CD4-positive, alpha-beta T cell (primary cell): ENCODE measurements at regions of chrX and their contacts with region 1.

Region 1: DNA sequence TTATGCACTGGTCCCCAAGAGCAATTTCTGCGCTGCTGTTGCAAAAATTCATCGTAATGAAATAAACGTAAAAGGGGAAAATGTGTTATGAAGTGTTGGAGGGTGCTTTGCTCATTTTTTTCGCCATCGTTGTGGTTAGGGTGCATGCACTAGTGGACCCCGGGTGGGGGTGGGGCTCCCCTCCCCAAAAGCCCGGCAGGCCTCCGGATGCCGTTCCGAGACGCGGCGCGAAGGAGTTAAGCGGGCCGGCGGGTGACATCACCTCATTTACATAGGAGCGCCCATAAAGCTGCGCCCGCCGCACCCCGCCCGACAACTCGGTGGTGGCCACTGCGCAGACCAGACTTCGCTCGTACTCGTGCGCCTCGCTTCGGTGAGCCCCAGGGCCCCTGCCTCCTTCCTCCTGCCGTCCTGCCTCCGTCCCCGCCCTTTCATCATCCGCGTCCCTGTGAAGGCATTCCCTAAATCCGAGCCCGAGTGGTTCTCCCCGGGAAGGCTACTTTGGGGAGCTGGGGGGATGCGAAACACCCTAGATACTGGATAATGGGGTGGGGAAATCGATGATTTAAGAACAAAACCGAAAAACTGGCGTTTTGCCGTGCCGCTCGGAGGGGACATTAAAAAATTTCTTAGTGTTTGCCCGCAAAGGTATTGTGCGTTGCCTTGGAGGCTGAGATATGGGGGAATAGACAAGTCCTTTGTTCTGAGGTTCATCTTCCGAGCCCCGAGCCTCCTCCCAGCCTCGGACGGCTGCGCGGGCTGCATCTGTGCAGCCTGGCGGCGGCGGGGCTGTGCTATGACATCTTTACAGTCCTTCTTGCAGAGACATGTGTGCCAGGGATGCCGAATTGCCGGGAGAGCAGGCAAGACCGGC is at the start of gene TMSB4X:
- DNase-seq: peak; percentile 70 to 90 (median 82)
- ATAC-seq: peak; percentile 35
- H3K4me3 ChIP-seq: peak within 1 kb of the TSS; percentile 98
- H3K4me3 Mint-ChIP-seq: peak within 1 kb of the TSS; percentile 100
- H3K27ac ChIP-seq: peak within 1 kb of the TSS; percentile 86 to 91
- H3K27ac Mint-ChIP-seq: peak within 1 kb of the TSS; percentile 95
- H3K4me1 ChIP-seq: peaks cover 29% of the 10 kb centered on the region
- H3K4me1 Mint-ChIP-seq: peaks cover 39% of the 10 kb centered on the region
- H3K27me3 ChIP-seq: no peaks in the 10 kb centered on the region
- H3K27me3 Mint-ChIP-seq: no peaks in the 10 kb centered on the region
- CTCF ChIP-seq: no peak
- total RNA-seq, gene TMSB4X: 2,621 to 2,738 TPM

Region 2: GRCh38 chrX:12955882-12956703 is 18.9 kb before region 1 on chrX:
- CTCF ChIA-PET with region 1: interaction called, 181 read pairs
- POLR2A ChIA-PET with region 1: interaction called, 1,050 read pairs
- intact Hi-C with region 1: loop called (anchors 1 to 2 kb)
- DNase-seq: peak in 11 of 14 experiments; percentile 38 to 84 (median 61)
- ATAC-seq: peak; percentile 18
- H3K4me3 ChIP-seq: peak overlapping the region; percentile 47
- H3K4me3 Mint-ChIP-seq: peak overlapping the region; percentile 89
- H3K27ac ChIP-seq: peak overlapping the region; percentile 87 to 89
- H3K27ac Mint-ChIP-seq: peak overlapping the region; percentile 95
- H3K4me1 ChIP-seq: peaks cover 80% of the 10 kb centered on the region
- H3K4me1 Mint-ChIP-seq: peaks cover 87% of the 10 kb centered on the region
- H3K27me3 ChIP-seq: no peaks in the 10 kb centered on the region
- H3K27me3 Mint-ChIP-seq: no peaks in the 10 kb centered on the region
- CTCF ChIP-seq: no peak

Region 3: DNA sequence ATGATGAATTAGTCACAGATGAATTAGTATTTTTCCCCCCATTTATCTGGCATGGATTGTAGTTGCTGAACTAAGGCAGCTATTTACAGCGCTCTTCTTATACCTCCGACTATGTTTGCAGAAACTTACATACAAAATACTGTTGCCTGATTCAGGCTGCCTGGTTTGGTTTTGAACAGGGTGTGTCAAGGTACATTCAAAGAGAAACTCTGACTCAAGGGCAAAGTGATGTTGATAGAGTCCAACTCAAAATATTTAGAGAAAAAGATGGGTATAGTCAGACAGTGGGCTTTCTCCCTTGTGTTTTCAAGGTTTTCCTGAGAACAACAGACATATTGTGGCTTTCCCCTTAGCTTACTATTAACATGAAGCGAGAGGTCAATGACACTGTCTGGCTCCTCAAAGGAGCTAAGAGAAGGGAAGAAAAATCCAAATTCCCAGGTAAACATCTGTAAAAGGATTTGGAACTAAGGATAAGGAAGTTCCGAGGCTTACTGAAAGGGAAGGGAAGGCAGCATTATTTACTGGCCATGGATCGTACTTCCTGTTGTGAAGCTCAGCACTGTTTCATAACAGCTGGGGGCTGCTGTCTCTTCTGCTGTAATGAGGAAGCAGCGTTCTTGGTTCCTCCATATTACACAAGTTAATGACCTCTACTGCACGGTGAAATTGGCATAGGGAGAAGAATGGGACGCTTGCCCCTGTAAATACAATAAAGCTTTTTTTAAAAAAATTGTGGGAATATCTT is 38.5 kb after region 1 on chrX:
- CTCF ChIA-PET with region 1: no interaction called
- POLR2A ChIA-PET with region 1: interaction called, 502 read pairs
- intact Hi-C with region 1: loop called (anchors 5 kb)
- DNase-seq: peak in 7 of 14 experiments; percentile 8 to 66 (median 43)
- ATAC-seq: peak; percentile 84
- H3K4me3 ChIP-seq: peak overlapping the region; percentile 9
- H3K4me3 Mint-ChIP-seq: peak overlapping the region; percentile 68
- H3K27ac ChIP-seq: peak overlapping the region; percentile 63 to 66
- H3K27ac Mint-ChIP-seq: peak overlapping the region; percentile 88
- H3K4me1 ChIP-seq: peaks cover 45% of the 10 kb centered on the region
- H3K4me1 Mint-ChIP-seq: peaks cover 76% of the 10 kb centered on the region
- H3K27me3 ChIP-seq: no peaks in the 10 kb centered on the region
- H3K27me3 Mint-ChIP-seq: no peaks in the 10 kb centered on the region
- CTCF ChIP-seq: no peak

Region 4: DNA sequence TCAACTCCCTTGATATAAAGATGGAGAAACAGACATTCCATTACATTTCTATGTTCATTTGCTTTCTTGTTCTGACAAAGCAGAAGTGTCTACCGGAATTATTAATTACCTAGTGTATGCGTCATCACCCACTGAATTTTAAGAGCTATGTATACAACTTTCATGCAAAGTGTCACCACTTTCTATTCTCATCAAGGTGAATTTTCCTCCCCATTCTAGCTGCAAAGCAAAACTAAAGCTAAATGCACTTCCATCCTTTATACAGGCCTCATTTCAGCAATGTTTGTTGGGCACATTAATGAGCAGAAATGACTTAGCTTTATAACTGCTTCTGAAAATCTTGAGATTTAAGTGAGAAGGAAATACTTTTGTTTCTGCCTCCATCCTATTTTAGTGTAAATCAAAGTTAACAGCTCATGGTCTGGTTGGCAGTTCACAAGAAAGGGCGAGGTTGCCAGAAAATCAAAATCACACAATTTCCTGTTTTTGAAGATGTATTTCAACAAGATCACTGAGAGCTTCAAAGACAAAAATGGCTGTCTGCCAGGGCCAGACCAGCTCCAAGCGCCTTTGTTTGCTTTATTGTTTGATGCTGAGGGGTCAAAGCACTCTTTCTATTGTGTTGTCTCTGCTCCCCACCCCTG is 76.6 kb after region 1 on chrX:
- CTCF ChIA-PET with region 1: no interaction called
- POLR2A ChIA-PET with region 1: interaction called, 214 read pairs
- intact Hi-C with region 1: loop called in 1 of 2 experiments (anchors 2 kb)
- DNase-seq: peak in 13 of 14 experiments; percentile 30 to 77 (median 55)
- ATAC-seq: peak; percentile 83
- H3K4me3 ChIP-seq: no peak overlapping the region
- H3K4me3 Mint-ChIP-seq: peak overlapping the region; percentile 81
- H3K27ac ChIP-seq: peak overlapping the region; percentile 63 to 78
- H3K27ac Mint-ChIP-seq: peak overlapping the region; percentile 98
- H3K4me1 ChIP-seq: peaks cover 53% of the 10 kb centered on the region
- H3K4me1 Mint-ChIP-seq: peaks cover 82% of the 10 kb centered on the region
- H3K27me3 ChIP-seq: no peaks in the 10 kb centered on the region
- H3K27me3 Mint-ChIP-seq: no peaks in the 10 kb centered on the region
- CTCF ChIP-seq: no peak

Region 5: DNA sequence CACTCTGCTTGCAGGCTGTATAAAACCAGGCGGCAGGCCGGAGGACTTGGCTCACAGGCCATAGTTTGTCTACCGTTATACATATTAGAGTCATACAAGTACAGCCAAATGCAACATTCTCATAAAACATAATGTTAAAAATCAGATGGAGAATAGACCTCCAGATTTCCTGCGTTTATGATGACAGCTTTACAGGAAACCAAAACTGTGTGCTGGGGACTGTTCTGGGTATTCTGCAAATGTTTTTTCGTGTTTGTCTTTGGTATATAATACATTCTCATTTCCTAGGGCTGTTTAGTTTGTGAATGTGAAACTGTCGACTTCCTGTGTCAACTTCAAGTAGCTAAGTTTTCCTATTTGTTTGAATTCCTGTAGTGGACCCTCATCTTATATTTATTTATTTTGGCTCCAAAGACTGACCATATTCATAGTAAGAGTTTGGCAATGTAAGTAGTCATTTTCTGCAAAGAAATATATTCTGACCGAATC is 148.9 kb after region 1 on chrX:
- CTCF ChIA-PET with region 1: no interaction called
- POLR2A ChIA-PET with region 1: interaction called, 13 read pairs
- intact Hi-C with region 1: no loop called
- DNase-seq: peak in 4 of 14 experiments; percentile 1 to 56 (median 12)
- ATAC-seq: peak; percentile 65
- H3K4me3 ChIP-seq: no peak overlapping the region
- H3K4me3 Mint-ChIP-seq: peak overlapping the region; percentile 69
- H3K27ac ChIP-seq: peak overlapping the region; percentile 13 to 69
- H3K27ac Mint-ChIP-seq: peak overlapping the region; percentile 93
- H3K4me1 ChIP-seq: peaks cover 23% of the 10 kb centered on the region
- H3K4me1 Mint-ChIP-seq: peaks cover 54% of the 10 kb centered on the region
- H3K27me3 ChIP-seq: no peaks in the 10 kb centered on the region
- H3K27me3 Mint-ChIP-seq: no peaks in the 10 kb centered on the region
- CTCF ChIP-seq: no peak

Region 6: GRCh38 chrX:14029425-14030173 is 1054.6 kb after region 1 on chrX and contains the start of gene GEMIN8:
- CTCF ChIA-PET with region 1: no interaction called
- POLR2A ChIA-PET with region 1: interaction called, 3 read pairs
- intact Hi-C with region 1: loop called in 1 of 2 experiments (anchors 10 kb)
- DNase-seq: peak; percentile 73 to 94 (median 84)
- ATAC-seq: peak; percentile 85
- H3K4me3 ChIP-seq: peak within 1 kb of the TSS; percentile 82
- H3K4me3 Mint-ChIP-seq: peak within 1 kb of the TSS; percentile 99
- H3K27ac ChIP-seq: peak within 1 kb of the TSS; percentile 82 to 93
- H3K27ac Mint-ChIP-seq: peak within 1 kb of the TSS; percentile 97
- H3K4me1 ChIP-seq: peaks cover 29% of the 10 kb centered on the region
- H3K4me1 Mint-ChIP-seq: peaks cover 52% of the 10 kb centered on the region
- H3K27me3 ChIP-seq: no peaks in the 10 kb centered on the region
- H3K27me3 Mint-ChIP-seq: no peaks in the 10 kb centered on the region
- CTCF ChIP-seq: no peak
- total RNA-seq, gene GEMIN8: 10.2 to 11.1 TPM